ENCODE measurements at regions of chr14 and their contacts with region 1.

Region 1: DNA sequence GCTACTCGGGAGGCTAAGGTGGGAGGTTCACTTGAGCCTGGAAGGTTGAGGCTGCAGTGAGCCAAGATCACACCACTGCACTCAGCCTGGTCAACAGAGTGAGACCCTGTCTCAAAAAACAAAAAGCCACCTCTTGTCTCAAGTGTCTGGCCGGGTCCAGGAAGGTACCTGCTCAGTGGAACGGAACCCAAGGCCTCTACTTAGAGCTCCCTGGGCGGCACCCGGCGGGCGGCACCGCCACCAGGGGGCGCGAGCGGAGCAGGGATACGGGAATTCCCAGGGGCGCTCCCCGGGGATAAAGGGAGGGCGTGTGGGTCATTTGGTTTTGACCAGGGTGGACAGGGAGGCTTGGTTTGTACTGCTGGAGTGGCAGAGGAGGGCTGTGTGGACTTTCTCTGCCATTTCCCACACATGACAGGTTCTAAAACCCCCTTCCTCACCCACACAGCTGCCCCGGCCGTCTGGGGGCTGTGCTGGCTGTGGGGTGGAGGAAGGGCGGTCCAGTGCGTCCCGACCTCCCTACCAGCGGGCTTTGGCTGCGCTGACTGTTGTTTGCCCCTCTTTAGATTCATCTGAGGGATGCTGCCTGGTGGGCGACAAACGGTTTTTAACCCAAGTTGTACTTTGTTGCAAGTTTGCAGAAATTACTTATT is 91.4 kb downstream of the SETD3 start:
- DNase-seq: peak in 1 of 2 donors; percentile 57
- ATAC-seq: peak in 1 of 3 donors; percentile 63
- H3K4me3 ChIP-seq: no peak overlapping the region
- H3K4me3 Mint-ChIP-seq: no peak overlapping the region
- H3K27ac ChIP-seq: no peak overlapping the region
- H3K27ac Mint-ChIP-seq: peak overlapping the region; percentile 48 to 73
- H3K4me1 ChIP-seq: peaks cover 21% of the 10 kb centered on the region
- H3K4me1 Mint-ChIP-seq: peaks cover 27 to 36% of the 10 kb centered on the region in 2 donors
- H3K27me3 ChIP-seq: no peaks in the 10 kb centered on the region
- H3K27me3 Mint-ChIP-seq: no peaks in the 10 kb centered on the region
- CTCF ChIP-seq: peak; percentile 49

Region 2: GRCh38 chr14:97641827-97642226 is 1747.5 kb before region 1 on chr14:
- intact Hi-C with region 1: no loop called
- DNase-seq: peak in 1 of 2 donors; percentile 13
- ATAC-seq: peak in 2 of 3 donors; percentile 54 to 68
- H3K4me3 ChIP-seq: no peak overlapping the region
- H3K4me3 Mint-ChIP-seq: no peak overlapping the region
- H3K27ac ChIP-seq: no peak overlapping the region
- H3K27ac Mint-ChIP-seq: peak overlapping the region in 1 of 2 donors; percentile 40
- H3K4me1 ChIP-seq: no peaks in the 10 kb centered on the region
- H3K4me1 Mint-ChIP-seq: peaks cover 40 to 43% of the 10 kb centered on the region in 2 donors
- H3K27me3 ChIP-seq: no peaks in the 10 kb centered on the region
- H3K27me3 Mint-ChIP-seq: no peaks in the 10 kb centered on the region
- CTCF ChIP-seq: no peak

Region 3: GRCh38 chr14:99064226-99064954 is 324.9 kb before region 1 on chr14:
- intact Hi-C with region 1: loop called (anchors 10 kb)
- DNase-seq: no peak
- ATAC-seq: no peak
- H3K4me3 ChIP-seq: no peak overlapping the region
- H3K4me3 Mint-ChIP-seq: no peak overlapping the region
- H3K27ac ChIP-seq: no peak overlapping the region
- H3K27ac Mint-ChIP-seq: no peak overlapping the region
- H3K4me1 ChIP-seq: no peaks in the 10 kb centered on the region
- H3K4me1 Mint-ChIP-seq: no peaks in the 10 kb centered on the region
- H3K27me3 ChIP-seq: no peaks in the 10 kb centered on the region
- H3K27me3 Mint-ChIP-seq: peaks cover 0 to 2% of the 10 kb centered on the region in 2 donors
- CTCF ChIP-seq: no peak